ENCODE measurements at regions of chr12 and their contacts with region 1.

Region 1: GRCh38 chr12:110449799-110450497 is at the start of gene ARPC3:
- DNase-seq: peak; percentile 97
- ATAC-seq: peak; percentile 96
- H3K4me3 ChIP-seq: peak within 1 kb of the TSS; percentile 94
- H3K27ac ChIP-seq: peak within 1 kb of the TSS; percentile 75
- H3K4me1 ChIP-seq: 0 out of 2 replicates have a peak, but pooled peaks cover 5% of the 10 kb centered on the region
- H3K27me3 ChIP-seq: no peaks in the 10 kb centered on the region
- CTCF ChIP-seq: peak; percentile 82
- total RNA-seq, gene ARPC3: 202 and 292 TPM in 2 replicates

Region 2: DNA sequence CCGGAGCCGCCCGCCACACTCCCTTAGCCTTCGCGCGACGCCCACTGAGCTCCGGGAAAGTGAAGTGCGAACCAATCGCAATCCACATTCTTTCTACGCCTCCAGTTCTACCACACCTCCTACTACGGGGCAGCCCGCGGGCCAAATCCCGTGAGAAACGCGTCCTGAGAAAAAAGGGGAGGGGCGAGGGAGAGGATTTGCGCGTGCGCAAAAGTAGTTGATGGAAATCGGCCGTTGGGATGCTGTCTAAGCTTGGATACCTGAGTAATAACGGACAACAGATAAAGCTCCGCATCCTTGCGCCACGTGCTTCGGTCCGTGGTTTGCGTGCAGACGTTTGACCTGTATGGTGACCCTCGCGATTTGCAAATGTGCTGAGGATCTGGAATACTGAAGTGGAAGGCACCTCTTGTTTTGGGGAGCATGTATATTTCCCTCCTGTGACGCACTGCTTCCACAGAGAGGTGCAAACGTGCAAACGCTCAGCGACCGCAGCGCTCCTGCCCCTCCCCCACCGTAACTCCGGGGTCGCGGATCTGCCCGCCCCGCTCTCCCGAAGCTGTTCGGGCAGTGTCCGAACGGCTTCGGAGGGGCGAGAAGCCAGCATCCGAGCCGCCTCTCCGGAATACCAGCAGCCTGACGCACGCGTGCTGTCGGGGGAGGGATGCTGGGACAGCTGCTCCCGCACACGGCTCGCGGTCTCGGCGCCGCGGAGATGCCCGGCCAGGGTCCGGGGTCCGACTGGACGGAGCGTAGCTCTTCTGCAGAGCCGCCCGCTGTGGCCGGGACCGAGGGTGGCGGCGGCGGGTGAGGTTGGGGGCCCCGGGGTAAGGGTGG is 18.5 kb after region 1 on chr12 and contains the starts of genes FAM216A and GPN3:
- CTCF ChIA-PET with region 1: interaction called, 13 read pairs
- POLR2A ChIA-PET with region 1: interaction called, 8 read pairs
- intact Hi-C with region 1: loop called (anchors 1 kb)
- DNase-seq: peak; percentile 99
- ATAC-seq: peak; percentile 84
- H3K4me3 ChIP-seq: peak within 1 kb of the TSS; percentile 84
- H3K27ac ChIP-seq: peak within 1 kb of the TSS; percentile 75
- H3K4me1 ChIP-seq: peaks cover 14% of the 10 kb centered on the region
- H3K27me3 ChIP-seq: no peaks in the 10 kb centered on the region
- CTCF ChIP-seq: no peak
- total RNA-seq, gene FAM216A: 19.5 and 27.8 TPM in 2 replicates
- total RNA-seq, gene GPN3: 31.4 and 32.5 TPM in 2 replicates

Measured in PC-3 (cell line).